CD8-positive, alpha-beta memory T cell (primary cell): ENCODE measurements at regions of chr10 and their contacts with region 1.

Region 1: DNA sequence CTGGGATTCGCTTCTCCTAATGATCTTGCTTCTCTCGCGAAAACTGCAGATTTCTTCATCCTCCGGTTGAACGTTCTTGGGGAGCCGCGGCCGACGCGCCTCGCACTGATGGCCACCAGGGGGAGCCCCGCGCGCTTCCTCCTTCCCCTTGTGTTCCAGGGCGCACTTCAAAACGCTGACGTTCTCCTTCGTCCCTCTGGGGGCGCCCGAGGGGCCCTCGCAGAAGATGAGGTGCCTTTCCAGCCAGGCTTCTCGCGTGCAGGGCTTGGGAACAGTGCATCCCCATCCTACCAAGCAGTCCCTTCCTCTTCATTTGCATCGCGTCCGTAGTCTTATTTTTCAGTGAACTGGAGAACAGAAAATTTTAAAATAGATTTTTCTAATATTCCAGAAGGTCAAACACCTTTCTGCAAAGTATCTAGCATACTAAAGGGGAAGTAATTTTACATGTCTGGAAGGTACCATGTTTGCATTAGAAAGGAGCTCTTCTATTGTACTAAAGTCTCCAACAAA is 22.5 kb downstream of the GSTO2 start:
- DNase-seq: peak; percentile 81 to 90 (median 83)
- H3K4me3 ChIP-seq: no peak overlapping the region
- H3K4me3 Mint-ChIP-seq: peak overlapping the region in 1 of 7 donors; percentile 29
- H3K27ac ChIP-seq: no peak overlapping the region
- H3K27ac Mint-ChIP-seq: peak overlapping the region in 3 of 8 donors; percentile 21 to 35 (median 34)
- H3K4me1 ChIP-seq: peaks cover 9% of the 10 kb centered on the region
- H3K4me1 Mint-ChIP-seq: peaks cover 5 to 7% (median 6%) of the 10 kb centered on the region in 3 donors
- H3K27me3 ChIP-seq: peaks cover 4% of the 10 kb centered on the region
- H3K27me3 Mint-ChIP-seq: peaks cover 23 to 42% of the 10 kb centered on the region in 2 donors

Region 2: GRCh38 chr10:104274762-104275721 is 16.5 kb before region 1 on chr10:
- CTCF ChIA-PET with region 1: interaction called, 79 read pairs
- POLR2A ChIA-PET with region 1: no interaction called
- DNase-seq: peak in 4 of 5 donors; percentile 18 to 51 (median 35)
- H3K4me3 ChIP-seq: no peak overlapping the region
- H3K4me3 Mint-ChIP-seq: peak overlapping the region in 3 of 7 donors; percentile 15 to 52 (median 20)
- H3K27ac ChIP-seq: no peak overlapping the region
- H3K27ac Mint-ChIP-seq: no peak overlapping the region
- H3K4me1 ChIP-seq: peaks cover 3% of the 10 kb centered on the region
- H3K4me1 Mint-ChIP-seq: peaks cover 0 to 6% (median 0%) of the 10 kb centered on the region in 3 donors
- H3K27me3 ChIP-seq: no peaks in the 10 kb centered on the region
- H3K27me3 Mint-ChIP-seq: peaks cover 8 to 35% of the 10 kb centered on the region in 2 donors

Region 3: GRCh38 chr10:104328896-104329710 is 37.6 kb after region 1 on chr10:
- CTCF ChIA-PET with region 1: interaction called, 20 read pairs
- POLR2A ChIA-PET with region 1: no interaction called
- DNase-seq: peak; percentile 67 to 90 (median 78)
- H3K4me3 ChIP-seq: peak overlapping the region; percentile 49
- H3K4me3 Mint-ChIP-seq: peak overlapping the region; percentile 72 to 92 (median 79)
- H3K27ac ChIP-seq: peak overlapping the region; percentile 68
- H3K27ac Mint-ChIP-seq: peak overlapping the region; percentile 89 to 100 (median 97)
- H3K4me1 ChIP-seq: peaks cover 100% of the 10 kb centered on the region
- H3K4me1 Mint-ChIP-seq: peaks cover 90 to 100% (median 99%) of the 10 kb centered on the region in 3 donors
- H3K27me3 ChIP-seq: no peaks in the 10 kb centered on the region
- H3K27me3 Mint-ChIP-seq: peaks cover 0 to 11% of the 10 kb centered on the region in 2 donors

Region 4: DNA sequence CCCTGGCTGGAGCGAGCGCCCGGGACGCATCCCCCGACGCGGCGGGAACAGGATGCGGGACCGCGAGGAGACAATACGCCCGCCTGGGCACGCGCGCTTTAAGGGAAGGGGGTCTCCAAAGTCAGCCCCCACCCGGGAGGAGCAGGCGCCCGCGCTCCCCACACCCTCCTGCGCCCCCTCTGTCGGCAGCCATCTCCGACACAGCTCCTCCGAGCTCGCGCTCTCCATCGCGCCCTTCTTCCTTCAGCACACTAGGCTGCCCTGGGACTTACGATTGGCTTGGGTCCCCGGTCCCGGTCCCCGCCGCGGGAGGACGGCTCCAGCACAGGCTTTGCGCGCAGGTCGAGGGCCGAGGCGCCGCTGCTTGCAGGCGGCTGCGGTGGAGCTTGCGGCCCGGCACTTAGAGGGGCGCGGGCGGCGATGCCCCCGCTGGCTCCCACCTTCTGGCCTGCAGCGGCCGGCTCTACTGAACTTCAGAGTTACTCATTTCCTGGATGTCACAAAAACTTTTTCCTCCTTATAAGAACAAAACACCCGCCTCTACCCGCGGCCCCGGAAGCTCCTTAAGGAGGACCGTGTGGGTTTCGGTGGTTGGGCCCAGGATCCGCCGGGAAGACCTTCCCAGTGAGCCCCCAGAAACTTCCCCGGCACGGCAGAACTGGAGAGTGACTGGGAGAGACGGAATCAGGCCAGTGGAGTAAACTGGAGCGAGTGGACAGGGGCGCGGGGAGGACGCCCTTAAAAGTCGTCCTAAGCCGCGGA is 46.7 kb after region 1 on chr10 and contains the start of gene ITPRIP:
- CTCF ChIA-PET with region 1: interaction called, 20 read pairs
- POLR2A ChIA-PET with region 1: interaction called, 4 read pairs
- DNase-seq: peak; percentile 62 to 91 (median 82)
- H3K4me3 ChIP-seq: peak within 1 kb of the TSS; percentile 59
- H3K4me3 Mint-ChIP-seq: peak within 1 kb of the TSS; percentile 91 to 100 (median 98)
- H3K27ac ChIP-seq: peak within 1 kb of the TSS; percentile 89
- H3K27ac Mint-ChIP-seq: peak within 1 kb of the TSS; percentile 89 to 100 (median 99)
- H3K4me1 ChIP-seq: peaks cover 47% of the 10 kb centered on the region
- H3K4me1 Mint-ChIP-seq: peaks cover 46 to 59% (median 53%) of the 10 kb centered on the region in 3 donors
- H3K27me3 ChIP-seq: no peaks in the 10 kb centered on the region
- H3K27me3 Mint-ChIP-seq: peaks cover 3 to 4% of the 10 kb centered on the region in 2 donors
- total RNA-seq, gene ITPRIP: 12.8 to 13.1 TPM

Region 5: GRCh38 chr10:104345941-104346340 is 54.4 kb after region 1 on chr10:
- CTCF ChIA-PET with region 1: interaction called, 104 read pairs
- POLR2A ChIA-PET with region 1: interaction called, 5 read pairs
- DNase-seq: no peak
- H3K4me3 ChIP-seq: no peak overlapping the region
- H3K4me3 Mint-ChIP-seq: peak overlapping the region in 1 of 7 donors; percentile 9
- H3K27ac ChIP-seq: no peak overlapping the region
- H3K27ac Mint-ChIP-seq: peak overlapping the region; percentile 0 to 89 (median 78)
- H3K4me1 ChIP-seq: peaks cover 6% of the 10 kb centered on the region
- H3K4me1 Mint-ChIP-seq: peaks cover 9 to 17% (median 10%) of the 10 kb centered on the region in 3 donors
- H3K27me3 ChIP-seq: no peaks in the 10 kb centered on the region
- H3K27me3 Mint-ChIP-seq: no peaks in the 10 kb centered on the region

Region 6: GRCh38 chr10:104353325-104354048 is 62.0 kb after region 1 on chr10 and contains the start of gene CFAP58:
- CTCF ChIA-PET with region 1: interaction called, 104 read pairs
- POLR2A ChIA-PET with region 1: interaction called, 5 read pairs
- DNase-seq: peak; percentile 87 to 93 (median 88)
- H3K4me3 ChIP-seq: peak within 1 kb of the TSS; percentile 67
- H3K4me3 Mint-ChIP-seq: peak within 1 kb of the TSS in 2 of 7 donors; percentile 75 to 81
- H3K27ac ChIP-seq: no peak within 1 kb of the TSS
- H3K27ac Mint-ChIP-seq: peak within 1 kb of the TSS in 5 of 8 donors; percentile 13 to 87 (median 84)
- H3K4me1 ChIP-seq: peaks cover 20% of the 10 kb centered on the region
- H3K4me1 Mint-ChIP-seq: peaks cover 0 to 20% (median 0%) of the 10 kb centered on the region in 3 donors
- H3K27me3 ChIP-seq: no peaks in the 10 kb centered on the region
- H3K27me3 Mint-ChIP-seq: no peaks in the 10 kb centered on the region
- total RNA-seq, gene CFAP58: 0.07 TPM in 1 of 2 experiments, not detected in the other